GM10248 (cell line): ENCODE measurements at regions of chr6 and their contacts with region 1.

Region 1: GRCh38 chr6:45703041-45703739 is 312.5 kb downstream of the CLIC5 start:
- DNase-seq: no peak
- CTCF ChIP-seq: no peak

Region 2: DNA sequence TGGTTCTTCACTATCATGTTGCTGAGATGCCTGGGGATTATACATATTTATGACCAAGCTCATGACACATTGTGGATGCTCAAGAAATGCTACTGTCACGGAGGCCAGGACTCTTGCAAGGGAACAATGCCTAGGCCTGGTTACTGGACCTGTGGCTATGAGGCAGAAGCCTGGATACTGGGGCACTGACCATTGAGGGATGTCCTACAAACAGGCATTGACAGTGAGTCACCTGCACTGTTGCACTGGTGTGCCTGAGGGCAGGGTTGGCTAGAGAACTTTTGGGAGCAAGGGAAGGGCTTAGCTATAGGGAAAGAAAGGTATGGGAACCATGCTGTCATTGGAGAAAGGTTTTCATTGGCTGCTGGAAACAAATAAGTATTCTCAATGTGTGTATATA is 12.3 kb before region 1 on chr6:
- CTCF ChIA-PET with region 1: interaction called, 15 read pairs
- POLR2A ChIA-PET with region 1: no interaction called
- DNase-seq: no peak
- CTCF ChIP-seq: no peak

Region 3: DNA sequence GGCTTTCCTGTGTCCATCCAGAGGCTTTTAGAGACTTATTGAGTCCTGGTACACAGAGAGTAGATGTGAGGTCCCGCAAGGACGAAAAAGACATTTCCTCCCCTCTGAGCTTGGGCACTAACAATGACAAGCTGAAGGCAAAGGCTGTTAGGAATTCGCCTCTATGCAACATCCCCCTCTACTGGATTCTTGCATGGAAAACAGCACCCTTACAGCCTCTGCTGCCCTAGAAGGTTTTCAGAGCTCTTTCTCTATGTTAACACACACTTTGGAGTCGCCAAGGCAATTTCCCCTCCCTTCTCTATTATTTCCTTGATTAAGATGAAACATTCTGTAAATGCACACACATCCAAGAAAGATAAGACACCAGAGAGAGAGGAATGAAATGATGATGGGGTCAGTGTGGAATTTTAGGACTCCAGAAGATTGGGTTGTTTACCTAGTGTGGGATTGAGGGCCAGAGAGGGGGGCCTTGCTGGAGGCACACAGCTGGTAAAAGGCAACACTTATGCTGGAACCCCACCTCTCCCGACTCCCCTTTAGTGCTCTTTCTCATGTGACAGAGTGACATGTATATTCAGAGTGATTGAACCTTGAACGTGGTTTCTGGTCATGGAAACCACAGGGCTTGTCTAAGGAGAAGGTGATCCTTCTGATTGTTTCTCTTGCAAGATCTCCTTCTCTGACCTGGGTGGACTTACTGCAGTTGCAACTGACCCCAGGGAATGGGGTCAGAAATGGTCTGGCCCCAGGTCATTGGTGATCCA is 11.7 kb after region 1 on chr6:
- CTCF ChIA-PET with region 1: interaction called, 14 read pairs
- POLR2A ChIA-PET with region 1: no interaction called
- DNase-seq: peak; percentile 60
- CTCF ChIP-seq: peak; percentile 66